Heart right ventricle (tissue), 16 donors: ENCODE measurements at regions of chr5 and their contacts with region 1.

Region 1: GRCh38 chr5:131417240-131417869 is 153.5 kb downstream of the CDC42SE2 start:
- DNase-seq: peak; percentile 71 to 78
- ATAC-seq: peak in 4 of 8 donors; percentile 39 to 64 (median 48)
- H3K4me3 ChIP-seq: no peak overlapping the region
- H3K27ac ChIP-seq: no peak overlapping the region
- H3K4me1 ChIP-seq: peaks cover 0 to 6% (median 0%) of the 10 kb centered on the region in 9 donors
- H3K27me3 ChIP-seq: no peaks in the 10 kb centered on the region
- CTCF ChIP-seq: peak; percentile 74 to 90 (median 84)

Region 2: GRCh38 chr5:129904102-129904666 is 1513.2 kb before region 1 on chr5 and contains the start of gene CHSY3:
- intact Hi-C with region 1: loop called in 5 of 10 experiments (anchors 5 to 10 kb)
- DNase-seq: peak; percentile 76 to 86
- ATAC-seq: peak; percentile 91 to 98 (median 92)
- H3K4me3 ChIP-seq: peak within 1 kb of the TSS; percentile 51 to 89 (median 74)
- H3K27ac ChIP-seq: peak within 1 kb of the TSS; percentile 41 to 84 (median 73)
- H3K4me1 ChIP-seq: peaks cover 0 to 27% (median 19%) of the 10 kb centered on the region in 9 donors
- H3K27me3 ChIP-seq: peaks cover 0 to 63% (median 0%) of the 10 kb centered on the region in 7 donors
- CTCF ChIP-seq: peak in 3 of 9 donors; percentile 22 to 41 (median 29)
- total RNA-seq, gene CHSY3: 0.47 to 1.6 (median 1.1) TPM

Region 3: GRCh38 chr5:130871346-130872086 is 545.8 kb before region 1 on chr5:
- intact Hi-C with region 1: loop called in 1 of 10 experiments (anchors 10 kb)
- DNase-seq: peak; percentile 12 to 14
- ATAC-seq: peak in 7 of 8 donors; percentile 45 to 92 (median 65)
- H3K4me3 ChIP-seq: no peak overlapping the region
- H3K27ac ChIP-seq: no peak overlapping the region
- H3K4me1 ChIP-seq: peaks cover 0 to 15% (median 0%) of the 10 kb centered on the region in 9 donors
- H3K27me3 ChIP-seq: no peaks in the 10 kb centered on the region
- CTCF ChIP-seq: peak in 8 of 9 donors; percentile 34 to 63 (median 47)

Region 4: DNA sequence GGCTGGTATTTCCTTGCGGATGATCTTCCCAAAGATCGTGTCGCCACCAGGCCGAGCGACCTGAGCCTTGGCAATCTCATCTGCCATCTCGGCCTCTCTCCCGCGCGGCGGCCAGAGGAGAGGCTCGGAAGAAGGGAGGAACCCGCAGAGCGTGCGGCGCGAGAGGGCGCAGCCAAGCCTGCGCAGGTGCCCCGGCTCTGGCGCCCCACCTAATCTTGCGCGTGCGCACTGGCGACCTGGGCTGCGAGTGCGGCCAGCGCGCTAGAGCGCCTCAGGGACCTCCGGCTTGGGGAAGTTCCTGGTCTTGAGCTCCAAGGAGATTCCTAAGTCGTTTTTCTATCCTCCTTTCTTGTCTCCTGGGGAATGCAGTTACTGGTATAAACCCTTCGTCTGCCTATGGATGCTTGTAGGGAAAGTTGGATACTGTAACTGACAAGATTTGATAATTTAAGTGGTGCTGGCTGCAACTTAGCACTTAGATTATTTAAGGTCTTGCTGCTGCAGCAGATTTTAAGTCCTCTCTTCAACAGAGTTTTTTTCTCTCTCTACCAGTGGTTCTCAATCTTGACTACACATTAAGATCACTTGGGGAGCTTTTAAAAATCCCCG is 252.1 kb before region 1 on chr5 and contains the start of gene HINT1:
- intact Hi-C with region 1: loop called in 7 of 10 experiments (anchors 2 to 10 kb)
- DNase-seq: peak; percentile 89 to 94
- ATAC-seq: peak; percentile 95 to 99 (median 98)
- H3K4me3 ChIP-seq: peak within 1 kb of the TSS; percentile 73 to 95 (median 82)
- H3K27ac ChIP-seq: peak within 1 kb of the TSS; percentile 85 to 98 (median 92)
- H3K4me1 ChIP-seq: peaks cover 0 to 30% (median 21%) of the 10 kb centered on the region in 9 donors
- H3K27me3 ChIP-seq: no peaks in the 10 kb centered on the region
- CTCF ChIP-seq: peak in 3 of 9 donors; percentile 8 to 24 (median 15)
- total RNA-seq, gene HINT1: 113 to 190 (median 130) TPM

Region 5: DNA sequence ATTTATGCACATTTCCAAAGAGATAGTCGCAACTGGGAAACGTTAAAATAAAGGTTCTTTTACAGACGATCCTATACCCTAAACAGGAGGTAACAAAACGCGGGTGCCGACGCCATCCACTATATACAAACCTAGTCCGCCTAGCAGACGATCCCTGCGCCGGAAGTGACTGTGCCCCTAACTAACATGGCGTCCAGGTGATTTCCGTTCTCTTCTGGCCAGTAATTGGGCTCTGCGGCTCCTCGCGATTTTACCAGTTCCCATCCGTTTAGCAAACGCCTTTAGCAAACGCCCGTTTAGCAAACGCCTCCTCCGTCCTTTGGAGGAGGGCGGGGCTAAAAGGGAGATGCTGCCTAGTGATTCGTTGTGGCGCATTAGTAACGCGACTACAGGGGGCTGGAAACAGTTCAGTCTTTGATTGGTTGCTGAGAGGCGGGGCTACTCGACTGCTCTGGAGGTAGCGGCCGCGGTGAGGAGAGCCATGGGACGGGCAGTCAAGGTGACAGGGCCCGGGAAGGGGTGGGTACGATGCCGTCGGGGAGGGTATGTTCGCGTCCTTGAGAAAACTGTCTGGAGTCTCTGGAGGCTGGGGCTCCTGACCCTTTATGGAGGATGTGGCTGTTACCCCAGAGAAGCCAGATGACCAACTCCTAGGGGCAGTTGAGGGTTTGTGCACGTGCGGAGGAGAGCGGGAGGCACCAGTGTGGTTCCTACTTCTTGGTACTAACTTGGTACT is 246.6 kb before region 1 on chr5 and contains the start of gene LYRM7:
- intact Hi-C with region 1: loop called in 6 of 10 experiments (anchors 2 to 10 kb)
- DNase-seq: peak; percentile 89 to 98
- ATAC-seq: peak; percentile 99 to 100 (median 99)
- H3K4me3 ChIP-seq: peak within 1 kb of the TSS; percentile 39 to 81 (median 73)
- H3K27ac ChIP-seq: peak within 1 kb of the TSS in 9 of 10 donors; percentile 62 to 88 (median 82)
- H3K4me1 ChIP-seq: peaks cover 5 to 24% (median 20%) of the 10 kb centered on the region in 9 donors
- H3K27me3 ChIP-seq: no peaks in the 10 kb centered on the region
- CTCF ChIP-seq: peak in 1 of 9 donors; percentile 17
- total RNA-seq, gene LYRM7: 16.5 to 31.5 (median 24.5) TPM

Region 6: GRCh38 chr5:131186561-131187256 is 230.6 kb before region 1 on chr5:
- intact Hi-C with region 1: loop called in 1 of 10 experiments (anchors 10 kb)
- DNase-seq: no peak
- ATAC-seq: no peak
- H3K4me3 ChIP-seq: no peak overlapping the region
- H3K27ac ChIP-seq: no peak overlapping the region
- H3K4me1 ChIP-seq: peaks cover 0 to 6% (median 0%) of the 10 kb centered on the region in 9 donors
- H3K27me3 ChIP-seq: no peaks in the 10 kb centered on the region
- CTCF ChIP-seq: no peak

Region 7: GRCh38 chr5:131224387-131225201 is 192.8 kb before region 1 on chr5:
- intact Hi-C with region 1: no loop called
- DNase-seq: peak; percentile 10 to 24
- ATAC-seq: peak in 7 of 8 donors; percentile 41 to 77 (median 69)
- H3K4me3 ChIP-seq: no peak overlapping the region
- H3K27ac ChIP-seq: peak overlapping the region in 1 of 10 donors; percentile 77
- H3K4me1 ChIP-seq: peaks cover 0 to 25% (median 0%) of the 10 kb centered on the region in 9 donors
- H3K27me3 ChIP-seq: no peaks in the 10 kb centered on the region
- CTCF ChIP-seq: no peak

Region 8: DNA sequence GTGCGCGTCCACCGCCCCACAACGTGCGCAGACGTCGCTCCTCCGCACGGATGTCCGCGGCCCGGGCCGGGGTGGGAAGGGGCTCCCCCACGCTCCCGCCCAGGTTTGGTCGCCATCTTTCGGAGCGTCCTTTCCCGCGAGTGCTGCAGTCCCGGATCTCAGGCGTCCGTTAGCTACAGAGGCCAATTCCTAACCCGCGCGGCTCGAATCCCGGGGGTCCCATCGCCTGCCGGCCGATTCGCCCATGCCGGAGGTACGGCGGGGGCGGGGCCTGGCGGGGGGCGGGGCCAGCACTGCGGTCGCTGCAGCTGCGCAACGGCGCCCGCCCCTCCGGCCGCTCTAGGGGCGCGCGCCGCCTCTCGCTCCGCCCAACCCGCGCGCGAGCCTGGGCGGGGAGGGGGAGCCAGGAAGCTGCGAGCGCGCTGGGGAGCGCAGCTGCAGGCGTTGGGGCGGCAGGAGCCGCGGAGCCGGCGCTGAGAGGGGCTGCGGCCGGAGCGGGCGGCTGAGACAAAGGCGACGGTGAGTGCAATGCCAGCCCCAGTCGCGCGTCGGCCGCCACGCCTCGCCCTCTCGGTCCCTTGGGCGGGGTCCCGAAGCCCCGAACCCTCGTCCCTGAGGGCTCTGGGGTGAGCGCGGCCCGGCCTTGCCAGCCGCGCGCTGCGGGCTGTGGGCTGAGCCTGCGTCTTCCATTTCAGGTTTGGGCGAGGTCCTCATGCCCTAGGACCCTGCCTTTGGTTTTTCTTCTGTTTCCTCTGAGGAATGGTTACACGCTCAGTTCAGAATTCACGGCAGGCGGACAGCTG is 153.5 kb before region 1 on chr5 and contains the start of gene CDC42SE2:
- intact Hi-C with region 1: loop called in 2 of 10 experiments (anchors 10 kb)
- DNase-seq: peak; percentile 82 to 88
- ATAC-seq: peak; percentile 98 to 100 (median 99)
- H3K4me3 ChIP-seq: peak within 1 kb of the TSS; percentile 69 to 98 (median 94)
- H3K27ac ChIP-seq: peak within 1 kb of the TSS; percentile 21 to 98 (median 88)
- H3K4me1 ChIP-seq: peaks cover 0 to 60% (median 22%) of the 10 kb centered on the region in 9 donors
- H3K27me3 ChIP-seq: no peaks in the 10 kb centered on the region
- CTCF ChIP-seq: peak in 1 of 9 donors; percentile 3
- total RNA-seq, gene CDC42SE2: 9.3 to 25.8 (median 11.4) TPM